ENCODE measurements at regions of chr5 and their contacts with region 1.

Region 1: DNA sequence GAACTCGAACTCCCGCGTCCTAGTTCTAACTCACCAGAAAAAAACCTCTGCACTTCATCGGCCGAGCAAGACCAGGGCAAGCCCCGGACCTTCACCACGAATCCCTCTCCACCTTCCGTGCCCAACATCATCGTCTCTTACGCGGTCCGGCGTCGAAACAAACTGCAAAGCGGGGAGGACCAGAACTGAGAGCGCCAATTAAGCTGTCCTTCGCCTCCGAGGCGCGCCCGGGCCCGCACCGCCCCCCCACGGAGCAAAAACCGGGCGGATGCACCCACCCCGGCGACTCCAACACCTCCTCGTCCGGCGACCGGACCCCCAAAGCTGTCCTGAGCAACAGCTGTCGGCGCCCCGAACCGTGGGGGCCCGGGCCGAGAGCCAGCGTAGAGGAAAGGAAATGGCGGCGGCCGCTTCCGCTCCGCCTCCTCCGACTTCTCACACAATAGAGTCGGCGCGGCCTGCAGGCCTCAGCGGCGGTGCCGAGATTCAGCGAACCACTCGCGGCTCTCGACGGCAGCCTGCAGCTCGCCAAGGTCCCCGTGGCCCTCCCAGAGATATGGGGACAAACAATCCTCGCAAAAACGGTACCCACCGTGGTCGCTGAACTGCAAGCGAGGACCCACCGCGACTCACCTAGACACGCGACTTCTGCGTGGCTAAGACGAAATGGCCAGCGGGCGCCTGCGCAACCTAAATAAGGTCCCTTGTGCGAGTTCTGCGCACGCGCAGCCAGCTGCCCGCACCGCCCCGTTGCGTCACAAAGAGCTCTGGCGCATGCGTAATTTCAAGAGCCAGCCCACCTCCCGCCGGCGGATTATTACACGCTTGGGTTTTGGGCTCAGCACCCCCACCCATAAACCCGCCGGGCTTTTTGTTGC is at the start of gene HNRNPH1:
- DNase-seq: peak; percentile 92 to 99 (median 99)
- ATAC-seq: peak; percentile 70 to 75
- H3K4me3 Mint-ChIP-seq: peak within 1 kb of the TSS; percentile 94 to 99 (median 98)
- H3K27ac Mint-ChIP-seq: peak within 1 kb of the TSS; percentile 97 to 100 (median 99)
- H3K4me1 Mint-ChIP-seq: peaks cover 27 to 55% (median 48%) of the 10 kb centered on the region in 4 donors
- H3K27me3 Mint-ChIP-seq: no peaks in the 10 kb centered on the region
- polyA plus RNA-seq, gene HNRNPH1: 97.0 to 120 (median 104) TPM

Region 2: DNA sequence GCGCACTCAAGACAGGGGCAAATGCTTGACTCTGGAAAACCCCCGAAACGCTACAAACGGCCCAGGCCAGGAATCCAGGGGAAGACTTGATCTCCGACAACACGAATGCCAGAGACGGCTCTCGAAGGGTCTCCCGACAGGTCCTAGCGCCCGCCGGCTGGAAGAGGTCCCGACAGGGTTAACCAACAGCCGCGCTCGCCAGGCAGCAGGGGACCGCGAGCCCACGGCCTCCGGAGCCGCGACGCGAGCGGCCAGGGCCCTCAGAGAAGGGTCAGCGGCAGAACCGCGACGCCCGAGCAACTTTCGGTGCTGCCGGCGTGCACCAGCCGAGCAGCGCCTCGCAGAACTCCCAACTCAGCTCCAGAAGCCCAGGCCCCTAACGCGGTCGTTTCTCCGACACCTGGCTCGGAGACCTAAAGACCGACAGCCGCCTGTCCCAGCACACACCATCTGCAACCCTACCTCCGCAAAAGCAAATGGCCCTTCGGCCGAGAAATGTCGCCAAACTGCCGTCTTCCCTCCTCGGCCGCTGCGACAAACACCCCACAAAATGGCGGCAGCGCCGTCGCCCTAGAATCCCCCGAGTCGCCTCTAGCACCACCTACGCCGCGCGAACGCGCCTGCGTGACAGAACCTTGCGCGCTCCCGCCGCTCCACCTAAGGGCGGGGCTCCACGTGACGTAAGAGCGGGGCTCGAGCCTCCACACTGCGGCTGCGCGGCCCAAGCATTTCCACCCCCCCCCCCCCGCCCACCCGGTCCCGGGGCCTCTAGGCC is 996.6 kb before region 1 on chr5 and contains the start of gene CLK4:
- POLR2A ChIA-PET with region 1: interaction called, 13 read pairs
- DNase-seq: peak; percentile 92 to 98 (median 96)
- ATAC-seq: peak; percentile 84
- H3K4me3 Mint-ChIP-seq: peak within 1 kb of the TSS; percentile 90 to 99 (median 98)
- H3K27ac Mint-ChIP-seq: peak within 1 kb of the TSS; percentile 97 to 100 (median 99)
- H3K4me1 Mint-ChIP-seq: peaks cover 14 to 50% (median 38%) of the 10 kb centered on the region in 4 donors
- H3K27me3 Mint-ChIP-seq: no peaks in the 10 kb centered on the region
- polyA plus RNA-seq, gene CLK4: 14.5 to 18.7 (median 18.0) TPM

Region 3: GRCh38 chr5:179243333-179243732 is 379.9 kb before region 1 on chr5:
- POLR2A ChIA-PET with region 1: no interaction called
- DNase-seq: peak in 1 of 10 donors; percentile 11
- ATAC-seq: no peak
- H3K4me3 Mint-ChIP-seq: no peak overlapping the region
- H3K27ac Mint-ChIP-seq: no peak overlapping the region
- H3K4me1 Mint-ChIP-seq: no peaks in the 10 kb centered on the region
- H3K27me3 Mint-ChIP-seq: peaks cover 4 to 49% (median 31%) of the 10 kb centered on the region in 5 donors

Region 4: DNA sequence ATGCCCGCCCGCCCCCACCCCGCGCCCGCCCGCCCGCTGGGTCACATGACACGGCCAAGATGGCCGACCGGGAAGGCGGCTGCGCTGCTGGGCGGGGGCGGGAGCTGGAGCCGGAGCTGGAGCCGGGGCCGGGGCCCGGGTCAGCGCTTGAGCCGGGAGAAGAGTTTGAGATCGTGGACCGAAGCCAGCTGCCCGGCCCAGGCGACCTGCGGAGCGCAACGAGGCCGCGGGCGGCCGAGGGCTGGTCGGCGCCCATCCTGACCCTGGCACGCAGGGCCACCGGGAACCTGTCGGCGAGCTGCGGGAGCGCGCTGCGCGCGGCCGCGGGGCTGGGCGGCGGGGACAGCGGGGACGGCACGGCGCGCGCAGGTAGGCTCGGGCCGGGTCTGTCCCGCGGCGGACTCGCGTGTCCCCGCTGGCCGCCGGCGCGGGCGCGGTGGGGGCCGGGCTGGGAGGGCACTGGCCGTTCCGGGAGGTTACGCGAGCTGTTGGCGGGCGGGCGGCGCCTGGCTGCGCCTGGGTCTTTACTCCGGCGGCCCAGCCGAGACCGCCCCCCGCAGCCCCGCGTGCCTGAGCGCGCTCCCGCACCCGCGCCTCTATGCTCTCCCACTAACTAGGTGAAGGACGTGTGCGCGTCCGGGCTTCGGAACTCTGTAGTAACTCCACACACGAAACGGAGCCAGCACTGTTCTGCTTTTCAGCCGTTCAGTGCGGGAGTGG is 72.6 kb before region 1 on chr5 and contains the start of gene RUFY1:
- POLR2A ChIA-PET with region 1: interaction called, 60 read pairs
- DNase-seq: peak; percentile 63 to 96 (median 84)
- ATAC-seq: peak; percentile 80 to 83
- H3K4me3 Mint-ChIP-seq: peak within 1 kb of the TSS; percentile 94 to 98 (median 97)
- H3K27ac Mint-ChIP-seq: peak within 1 kb of the TSS; percentile 94 to 98 (median 96)
- H3K4me1 Mint-ChIP-seq: peaks cover 8 to 51% (median 30%) of the 10 kb centered on the region in 4 donors
- H3K27me3 Mint-ChIP-seq: no peaks in the 10 kb centered on the region
- polyA plus RNA-seq, gene RUFY1: 27.9 to 35.3 (median 30.5) TPM

Region 5: GRCh38 chr5:179608131-179608581 is 15.1 kb before region 1 on chr5:
- POLR2A ChIA-PET with region 1: interaction called, 51 read pairs
- DNase-seq: peak in 8 of 10 donors; percentile 25 to 69 (median 48)
- ATAC-seq: peak; percentile 49 to 88
- H3K4me3 Mint-ChIP-seq: peak overlapping the region in 7 of 10 donors; percentile 18 to 67 (median 45)
- H3K27ac Mint-ChIP-seq: peak overlapping the region; percentile 33 to 91 (median 74)
- H3K4me1 Mint-ChIP-seq: peaks cover 22 to 53% (median 49%) of the 10 kb centered on the region in 4 donors
- H3K27me3 Mint-ChIP-seq: no peaks in the 10 kb centered on the region

Region 6: GRCh38 chr5:179643556-179643955 is 20.3 kb after region 1 on chr5:
- POLR2A ChIA-PET with region 1: no interaction called
- DNase-seq: no peak
- ATAC-seq: no peak
- H3K4me3 Mint-ChIP-seq: no peak overlapping the region
- H3K27ac Mint-ChIP-seq: no peak overlapping the region
- H3K4me1 Mint-ChIP-seq: peaks cover 0 to 1% (median 0%) of the 10 kb centered on the region in 4 donors
- H3K27me3 Mint-ChIP-seq: no peaks in the 10 kb centered on the region

Region 7: GRCh38 chr5:179697993-179698934 is 75.0 kb after region 1 on chr5:
- POLR2A ChIA-PET with region 1: interaction called, 16 read pairs
- DNase-seq: peak; percentile 96 to 99 (median 98)
- ATAC-seq: peak; percentile 89
- H3K4me3 Mint-ChIP-seq: peak overlapping the region; percentile 90 to 99 (median 97)
- H3K27ac Mint-ChIP-seq: peak overlapping the region; percentile 94 to 99 (median 99)
- H3K4me1 Mint-ChIP-seq: peaks cover 17 to 54% (median 43%) of the 10 kb centered on the region in 4 donors
- H3K27me3 Mint-ChIP-seq: no peaks in the 10 kb centered on the region

Region 8: DNA sequence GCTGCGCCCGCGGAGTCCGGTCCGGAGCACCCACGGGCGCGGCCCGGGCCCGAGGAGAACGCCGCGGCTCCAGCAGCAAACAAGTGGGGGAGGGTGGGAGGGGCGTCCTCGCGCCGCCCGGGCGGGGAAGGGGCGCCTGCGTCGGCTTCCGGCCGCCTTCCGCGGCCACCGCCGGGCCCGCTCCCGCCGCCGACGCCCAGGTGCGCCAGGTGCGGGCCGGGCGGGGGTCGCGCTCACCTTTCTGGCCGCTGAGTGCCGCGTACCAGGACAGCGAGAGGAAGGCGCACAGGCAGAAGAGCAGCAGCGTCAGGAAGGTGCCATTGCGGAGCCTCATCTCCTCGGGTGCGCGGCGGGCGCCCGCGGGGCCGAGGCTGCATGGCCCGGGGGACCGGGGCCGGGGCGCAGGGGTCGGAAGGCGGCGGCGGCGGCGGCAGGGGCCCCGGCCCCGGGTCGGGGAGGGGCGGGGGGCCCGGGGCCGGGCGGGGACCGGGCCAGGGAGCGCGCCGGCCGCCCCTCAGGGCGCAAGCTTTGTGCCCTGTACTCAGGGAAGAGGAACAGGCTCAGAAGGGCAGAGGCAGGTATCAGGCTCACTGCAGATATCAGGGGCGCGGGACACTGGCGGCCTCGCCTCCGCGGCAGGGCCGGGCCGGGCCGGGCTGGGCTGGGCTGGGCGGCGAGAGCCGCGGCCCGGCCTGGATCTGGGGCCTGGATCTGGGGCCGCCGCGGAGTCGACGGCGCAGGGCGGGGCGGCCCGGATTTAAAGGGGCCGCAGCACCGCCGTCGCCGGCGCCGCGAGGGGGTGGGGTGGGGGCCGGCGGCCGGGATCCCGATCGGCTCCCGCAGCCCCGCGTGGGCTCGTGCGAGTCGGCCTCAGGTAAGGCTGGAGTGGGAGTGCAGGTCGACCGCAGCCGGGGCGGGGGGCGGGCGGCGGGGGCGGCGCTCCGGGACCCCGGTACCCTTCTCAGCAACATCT is 183.3 kb after region 1 on chr5 and contains the start of gene MGAT4B:
- POLR2A ChIA-PET with region 1: interaction called, 16 read pairs
- DNase-seq: peak in 7 of 10 donors; percentile 41 to 61 (median 54)
- ATAC-seq: peak; percentile 73 to 74
- H3K4me3 Mint-ChIP-seq: peak within 1 kb of the TSS; percentile 62 to 88 (median 78)
- H3K27ac Mint-ChIP-seq: peak within 1 kb of the TSS in 5 of 10 donors; percentile 15 to 78 (median 65)
- H3K4me1 Mint-ChIP-seq: peaks cover 22 to 40% (median 36%) of the 10 kb centered on the region in 4 donors
- H3K27me3 Mint-ChIP-seq: peaks cover 0 to 3% (median 0%) of the 10 kb centered on the region in 5 donors
- polyA plus RNA-seq, gene MGAT4B: 7.8 to 20.9 (median 13.5) TPM

Region 9: GRCh38 chr5:180454752-180455151 is 831.5 kb after region 1 on chr5:
- POLR2A ChIA-PET with region 1: no interaction called
- DNase-seq: no peak
- ATAC-seq: no peak
- H3K4me3 Mint-ChIP-seq: no peak overlapping the region
- H3K27ac Mint-ChIP-seq: no peak overlapping the region
- H3K4me1 Mint-ChIP-seq: peaks cover 0 to 2% (median 0%) of the 10 kb centered on the region in 4 donors
- H3K27me3 Mint-ChIP-seq: peaks cover 17 to 42% (median 23%) of the 10 kb centered on the region in 5 donors